MCF 10A (cell line): ENCODE measurements at regions of chr12 and their contacts with region 1.

Region 1: GRCh38 chr12:75944097-75944904 is 87.3 kb downstream of the PHLDA1 start:
- DNase-seq: peak; percentile 78
- H3K4me3 Mint-ChIP-seq: peak overlapping the region; percentile 12
- H3K27ac Mint-ChIP-seq: peak overlapping the region; percentile 90
- H3K4me1 Mint-ChIP-seq: peaks cover 15% of the 10 kb centered on the region
- H3K27me3 Mint-ChIP-seq: no peaks in the 10 kb centered on the region
- CTCF ChIP-seq: no peak

Region 2: GRCh38 chr12:76020731-76021672 is 76.7 kb after region 1 on chr12:
- CTCF ChIA-PET with region 1: interaction called, 3 read pairs
- POLR2A ChIA-PET with region 1: interaction called, 5 read pairs
- intact Hi-C with region 1: loop called (anchors 2 kb)
- DNase-seq: peak; percentile 90
- H3K4me3 Mint-ChIP-seq: peak overlapping the region; percentile 14
- H3K27ac Mint-ChIP-seq: peak overlapping the region; percentile 96
- H3K4me1 Mint-ChIP-seq: peaks cover 35% of the 10 kb centered on the region
- H3K27me3 Mint-ChIP-seq: no peaks in the 10 kb centered on the region
- CTCF ChIP-seq: no peak